A673 (cell line): ENCODE measurements at regions of chr19 and their contacts with region 1.

Region 1: GRCh38 chr19:6651965-6652804 is 17.8 kb downstream of the TNFSF14 start:
- DNase-seq: no peak
- H3K4me3 ChIP-seq: no peak overlapping the region
- H3K27ac ChIP-seq: no peak overlapping the region
- H3K4me1 ChIP-seq: no peaks in the 10 kb centered on the region
- H3K27me3 ChIP-seq: no peaks in the 10 kb centered on the region
- CTCF ChIP-seq: no peak

Region 2: DNA sequence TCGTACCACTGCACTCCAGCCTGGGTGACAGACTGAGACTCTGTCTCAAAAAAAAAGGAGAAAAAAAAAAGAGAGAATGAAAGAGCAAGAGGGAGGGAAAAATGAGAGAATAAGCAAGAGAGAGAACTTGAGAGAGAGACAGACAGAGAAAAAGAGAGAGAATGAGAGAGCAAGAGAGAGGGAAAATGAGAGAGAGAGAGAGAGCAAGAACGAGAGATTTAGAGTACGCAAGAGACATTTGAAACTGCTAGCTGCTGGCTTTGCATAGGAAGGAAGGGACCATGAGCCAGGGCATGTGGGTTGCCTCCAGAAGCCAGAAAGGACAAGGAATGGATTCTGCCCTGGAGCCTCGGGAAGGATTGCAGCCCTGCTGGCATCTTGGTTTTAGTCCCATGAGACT is 225.6 kb after region 1 on chr19:
- CTCF ChIA-PET with region 1: no interaction called
- POLR2A ChIA-PET with region 1: interaction called, 13 read pairs
- intact Hi-C with region 1: no loop called
- DNase-seq: no peak
- H3K4me3 ChIP-seq: no peak overlapping the region
- H3K27ac ChIP-seq: no peak overlapping the region
- H3K4me1 ChIP-seq: no peaks in the 10 kb centered on the region
- H3K27me3 ChIP-seq: no peaks in the 10 kb centered on the region
- CTCF ChIP-seq: no peak